Activated CD4-positive, alpha-beta T cell treated with anti-CD3 and anti-CD28 coated beads, Interleukin-2, amount 10 ng/mL, durations not matched to agents 7 days and 5 days (primary cell): ENCODE measurements at regions of chr19 and their contacts with region 1.

Region 1: GRCh38 chr19:6021878-6022569 is 44.1 kb upstream of the RANBP3 start:
- DNase-seq: peak; percentile 87
- H3K4me3 Mint-ChIP-seq: no peak overlapping the region
- H3K27ac Mint-ChIP-seq: no peak overlapping the region
- H3K4me1 Mint-ChIP-seq: no peaks in the 10 kb centered on the region
- H3K27me3 Mint-ChIP-seq: no peaks in the 10 kb centered on the region

Region 2: GRCh38 chr19:5985098-5985783 is 36.8 kb before region 1 on chr19:
- CTCF ChIA-PET with region 1: interaction called, 16 read pairs
- POLR2A ChIA-PET with region 1: no interaction called
- DNase-seq: no peak
- H3K4me3 Mint-ChIP-seq: no peak overlapping the region
- H3K27ac Mint-ChIP-seq: no peak overlapping the region
- H3K4me1 Mint-ChIP-seq: peaks cover 48% of the 10 kb centered on the region
- H3K27me3 Mint-ChIP-seq: no peaks in the 10 kb centered on the region

Region 3: DNA sequence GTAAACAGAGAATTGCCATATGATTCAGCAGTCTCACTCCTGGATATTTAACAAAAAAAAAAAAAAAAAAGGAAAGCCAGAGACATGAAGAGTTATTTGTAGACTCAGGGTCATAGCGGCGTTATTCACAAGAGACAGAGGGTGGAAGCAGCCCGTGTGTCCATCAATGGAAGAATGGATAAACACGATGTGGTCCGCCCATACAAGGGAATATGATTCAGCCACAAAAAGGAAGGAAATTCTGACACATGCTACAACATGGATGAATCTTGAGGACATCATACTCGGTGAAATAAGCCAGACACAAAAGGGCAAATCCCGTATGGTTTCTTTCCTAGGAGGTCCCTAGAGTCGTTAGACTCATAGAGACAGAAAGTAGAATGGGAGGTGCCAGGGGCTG is 128.3 kb after region 1 on chr19:
- CTCF ChIA-PET with region 1: no interaction called
- POLR2A ChIA-PET with region 1: no interaction called
- DNase-seq: no peak
- H3K4me3 Mint-ChIP-seq: no peak overlapping the region
- H3K27ac Mint-ChIP-seq: no peak overlapping the region
- H3K4me1 Mint-ChIP-seq: no peaks in the 10 kb centered on the region
- H3K27me3 Mint-ChIP-seq: peaks cover 2% of the 10 kb centered on the region